ENCODE measurements at regions of chr2 and their contacts with region 1.

Region 1: GRCh38 chr2:24816884-24817283 is 23.7 kb downstream of the CENPO start:
- DNase-seq: no peak
- ATAC-seq: no peak
- H3K4me3 ChIP-seq: no peak overlapping the region
- H3K4me3 Mint-ChIP-seq: no peak overlapping the region
- H3K27ac ChIP-seq: no peak overlapping the region
- H3K27ac Mint-ChIP-seq: no peak overlapping the region
- H3K4me1 ChIP-seq: no peaks in the 10 kb centered on the region
- H3K4me1 Mint-ChIP-seq: no peaks in the 10 kb centered on the region
- H3K27me3 ChIP-seq: no peaks in the 10 kb centered on the region
- H3K27me3 Mint-ChIP-seq: no peaks in the 10 kb centered on the region
- CTCF ChIP-seq: no peak

Region 2: DNA sequence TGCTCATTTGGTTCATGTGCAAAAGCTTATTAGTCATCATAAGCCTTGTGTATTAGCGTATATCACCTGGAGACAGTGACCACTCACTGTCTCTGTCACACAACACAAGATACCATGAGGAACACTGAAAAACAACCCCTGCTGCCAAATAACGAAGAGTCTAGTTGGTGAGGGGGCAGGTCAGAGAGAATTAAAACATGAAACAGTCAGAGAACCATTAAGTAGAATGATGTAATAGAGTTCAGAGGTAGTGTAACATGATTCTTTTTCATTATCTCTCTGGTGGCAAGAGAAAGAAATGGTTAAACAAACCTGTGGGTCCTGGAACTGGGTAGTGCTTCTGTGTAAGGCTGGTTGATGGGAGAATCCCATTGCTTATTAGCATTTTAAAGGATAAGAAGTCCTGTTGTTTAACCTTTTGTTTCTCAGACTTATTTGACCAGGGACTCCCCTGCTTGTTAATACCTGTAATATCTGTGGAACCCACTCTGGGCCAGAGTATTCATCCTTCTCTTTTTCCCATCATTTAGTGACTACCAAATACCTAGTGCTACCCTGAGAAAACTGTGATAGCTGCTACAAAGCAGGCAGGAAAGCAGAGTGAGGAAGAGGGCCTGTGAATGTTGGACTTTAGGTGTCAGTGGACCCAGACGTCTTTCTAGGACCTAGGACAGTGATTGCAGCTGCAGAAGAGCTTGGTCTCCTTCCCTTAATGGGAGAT is 61.7 kb before region 1 on chr2:
- CTCF ChIA-PET with region 1: no interaction called
- POLR2A ChIA-PET with region 1: no interaction called
- intact Hi-C with region 1: loop called in 1 of 2 experiments (anchors 5 kb)
- DNase-seq: no peak
- ATAC-seq: no peak
- H3K4me3 ChIP-seq: no peak overlapping the region
- H3K4me3 Mint-ChIP-seq: no peak overlapping the region
- H3K27ac ChIP-seq: no peak overlapping the region
- H3K27ac Mint-ChIP-seq: no peak overlapping the region
- H3K4me1 ChIP-seq: no peaks in the 10 kb centered on the region
- H3K4me1 Mint-ChIP-seq: no peaks in the 10 kb centered on the region
- H3K27me3 ChIP-seq: no peaks in the 10 kb centered on the region
- H3K27me3 Mint-ChIP-seq: no peaks in the 10 kb centered on the region
- CTCF ChIP-seq: no peak

Measured in CD4-positive, alpha-beta T cell (primary cell).